GM12878 (cell line): ENCODE measurements at regions of chr16 and their contacts with region 1.

Region 1: GRCh38 chr16:70428178-70428998 is 10.5 kb downstream of the ST3GAL2 start:
- DNase-seq: peak; percentile 79
- ATAC-seq: peak; percentile 36
- H3K4me3 ChIP-seq: peak overlapping the region; percentile 67
- H3K27ac ChIP-seq: peak overlapping the region; percentile 98
- H3K4me1 ChIP-seq: peaks cover 52% of the 10 kb centered on the region
- H3K27me3 ChIP-seq: no peaks in the 10 kb centered on the region
- CTCF ChIP-seq: no peak
- EP300 ChIP-seq: peak in 1 of 2 experiments; percentile 74; a peak in 2 of 4 replicates
- POLR2A ChIP-seq: peak; percentile 61
- RAD21 ChIP-seq: peak; percentile 17; the same call in 1 of the 2 replicates

Region 2: GRCh38 chr16:70298988-70299938 is 129.1 kb before region 1 on chr16 and contains the start of gene DDX19B:
- CTCF ChIA-PET with region 1: no interaction called
- POLR2A ChIA-PET with region 1: no interaction called
- RAD21 ChIA-PET with region 1: no interaction called
- SMC1A ChIA-PET with region 1: no interaction called
- in situ Hi-C with region 1: no loop called
- intact Hi-C with region 1: no loop called
- DNase-seq: no peak
- ATAC-seq: peak; percentile 98
- H3K4me3 ChIP-seq: peak within 1 kb of the TSS; percentile 98
- H3K27ac ChIP-seq: peak within 1 kb of the TSS; percentile 93
- H3K4me1 ChIP-seq: peaks cover 7% of the 10 kb centered on the region
- H3K27me3 ChIP-seq: no peaks in the 10 kb centered on the region
- CTCF ChIP-seq: no peak; a peak in 1 of 6 replicates
- EP300 ChIP-seq: no peak
- POLR2A ChIP-seq: peak; percentile 98
- RAD21 ChIP-seq: no peak
- polyA plus RNA-seq, gene DDX19B: 14.1 to 17.6 TPM

Region 3: GRCh38 chr16:70410734-70411133 is 17.7 kb before region 1 on chr16:
- CTCF ChIA-PET with region 1: interaction called, 17 read pairs
- POLR2A ChIA-PET with region 1: interaction called, 58 read pairs
- RAD21 ChIA-PET with region 1: interaction called, 38 read pairs
- SMC1A ChIA-PET with region 1: interaction called, 37 read pairs
- in situ Hi-C with region 1: no loop called
- intact Hi-C with region 1: no loop called
- DNase-seq: no peak
- ATAC-seq: no peak
- H3K4me3 ChIP-seq: no peak overlapping the region
- H3K27ac ChIP-seq: no peak overlapping the region
- H3K4me1 ChIP-seq: peaks cover 39% of the 10 kb centered on the region
- H3K27me3 ChIP-seq: no peaks in the 10 kb centered on the region; a peak in 1 of 4 replicates
- CTCF ChIP-seq: no peak
- EP300 ChIP-seq: no peak
- POLR2A ChIP-seq: no peak
- RAD21 ChIP-seq: no peak

Region 4: GRCh38 chr16:70438969-70439862 is 10.8 kb after region 1 on chr16 and contains the start of gene ST3GAL2:
- CTCF ChIA-PET with region 1: interaction called, 3 read pairs
- POLR2A ChIA-PET with region 1: interaction called, 5 read pairs
- RAD21 ChIA-PET with region 1: interaction called, 11 read pairs
- SMC1A ChIA-PET with region 1: interaction called, 7 read pairs
- in situ Hi-C with region 1: no loop called
- intact Hi-C with region 1: no loop called
- DNase-seq: peak; percentile 74
- ATAC-seq: peak; percentile 91
- H3K4me3 ChIP-seq: peak within 1 kb of the TSS; percentile 88
- H3K27ac ChIP-seq: peak within 1 kb of the TSS; percentile 71
- H3K4me1 ChIP-seq: peaks cover 20% of the 10 kb centered on the region
- H3K27me3 ChIP-seq: no peaks in the 10 kb centered on the region
- CTCF ChIP-seq: 0 out of 6 replicates have a peak, but pooled peaks of 1 of the 3 experiments have one; percentile 2
- EP300 ChIP-seq: no peak
- POLR2A ChIP-seq: peak; percentile 67
- RAD21 ChIP-seq: no peak
- polyA plus RNA-seq, gene ST3GAL2: 0.95 to 1.4 TPM

Region 5: GRCh38 chr16:70478912-70479341 is 50.5 kb after region 1 on chr16:
- CTCF ChIA-PET with region 1: interaction called, 6 read pairs
- POLR2A ChIA-PET with region 1: interaction called, 16 read pairs
- RAD21 ChIA-PET with region 1: interaction called, 19 read pairs
- SMC1A ChIA-PET with region 1: interaction called, 22 read pairs
- in situ Hi-C with region 1: no loop called
- intact Hi-C with region 1: loop called (anchors 2 kb)
- DNase-seq: no peak
- ATAC-seq: no peak
- H3K4me3 ChIP-seq: no peak overlapping the region
- H3K27ac ChIP-seq: no peak overlapping the region
- H3K4me1 ChIP-seq: peaks cover 35% of the 10 kb centered on the region
- H3K27me3 ChIP-seq: no peaks in the 10 kb centered on the region
- CTCF ChIP-seq: no peak
- EP300 ChIP-seq: no peak
- POLR2A ChIP-seq: 0 out of 2 replicates have a peak, but pooled peaks have one; percentile 4
- RAD21 ChIP-seq: no peak